ENCODE measurements at regions of chr10 and their contacts with region 1.

Region 1: GRCh38 chr10:57102234-57102633 is 741.2 kb upstream of the ZWINT start:
- DNase-seq: no peak

Region 2: DNA sequence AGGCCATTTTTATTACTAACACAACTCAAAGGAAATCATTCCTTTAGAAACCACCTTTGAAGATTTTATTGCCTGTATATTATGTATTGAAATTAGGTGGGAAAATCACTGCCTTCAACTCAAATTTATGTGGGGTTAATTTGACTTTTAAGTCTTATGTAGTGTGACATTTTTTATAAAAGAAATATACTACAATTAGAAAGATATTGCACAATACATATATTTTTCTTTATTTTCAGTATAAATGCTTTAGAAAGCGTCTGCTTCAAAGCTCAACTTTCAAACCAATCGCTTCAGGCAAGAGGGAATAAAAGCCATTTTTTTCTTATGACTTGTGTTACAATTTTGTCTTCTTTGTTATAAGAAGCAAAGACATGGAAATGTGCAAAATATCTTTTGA is 403.7 kb before region 1 on chr10:
- intact Hi-C with region 1: loop called in 1 of 2 experiments (anchors 5 kb)
- DNase-seq: no peak

Measured in posterior vena cava (tissue), 2 donors.